ENCODE measurements at regions of chr19 and their contacts with region 1.

Region 1: GRCh38 chr19:7570761-7571160 is 24.9 kb upstream of the CAMSAP3 start:
- DNase-seq: no peak
- H3K4me3 Mint-ChIP-seq: no peak overlapping the region
- H3K27ac Mint-ChIP-seq: no peak overlapping the region
- H3K4me1 Mint-ChIP-seq: peaks cover 9% of the 10 kb centered on the region
- H3K27me3 Mint-ChIP-seq: no peaks in the 10 kb centered on the region
- CTCF ChIP-seq: no peak

Region 2: GRCh38 chr19:7434391-7434790 is 136.4 kb before region 1 on chr19:
- CTCF ChIA-PET with region 1: no interaction called
- POLR2A ChIA-PET with region 1: no interaction called
- intact Hi-C with region 1: no loop called
- DNase-seq: no peak
- H3K4me3 Mint-ChIP-seq: no peak overlapping the region
- H3K27ac Mint-ChIP-seq: no peak overlapping the region
- H3K4me1 Mint-ChIP-seq: no peaks in the 10 kb centered on the region
- H3K27me3 Mint-ChIP-seq: no peaks in the 10 kb centered on the region
- CTCF ChIP-seq: no peak

Region 3: GRCh38 chr19:7629347-7630054 is 58.7 kb after region 1 on chr19 and contains the starts of genes PET100 and XAB2:
- CTCF ChIA-PET with region 1: interaction called, 10 read pairs
- POLR2A ChIA-PET with region 1: interaction called, 12 read pairs
- intact Hi-C with region 1: no loop called
- DNase-seq: peak; percentile 99
- H3K4me3 Mint-ChIP-seq: peak within 1 kb of the TSS; percentile 95
- H3K27ac Mint-ChIP-seq: peak within 1 kb of the TSS; percentile 100
- H3K4me1 Mint-ChIP-seq: peaks cover 23% of the 10 kb centered on the region
- H3K27me3 Mint-ChIP-seq: no peaks in the 10 kb centered on the region
- CTCF ChIP-seq: no peak
- total RNA-seq, gene PET100: 53.9 and 101 TPM in 2 replicates
- total RNA-seq, gene XAB2: 28.7 and 29.4 TPM in 2 replicates

Measured in MCF 10A (cell line).